ENCODE measurements at regions of chr17 and their contacts with region 1.

Region 1: DNA sequence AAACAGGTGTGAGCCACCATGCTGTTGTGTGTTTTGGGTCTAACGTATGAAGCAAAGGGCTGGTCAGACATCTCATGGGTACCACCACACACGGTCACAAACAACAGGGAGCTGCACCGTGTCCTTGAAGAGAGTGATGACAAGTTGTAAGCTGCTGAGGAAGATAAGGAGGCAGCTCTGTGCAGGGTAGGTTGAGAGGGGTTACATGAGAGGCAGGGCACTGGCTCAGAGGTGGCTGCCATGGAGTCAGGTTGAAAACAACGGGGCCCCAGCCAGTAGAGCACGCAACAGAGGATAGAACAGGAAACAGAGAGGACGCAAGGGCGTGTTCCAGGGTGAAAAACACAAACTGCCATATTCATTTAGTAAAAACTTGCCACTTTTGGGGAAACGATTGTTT is 52.2 kb downstream of the TRARG1 start:
- DNase-seq: peak; percentile 57
- H3K4me3 ChIP-seq: peak overlapping the region; percentile 9
- H3K27ac ChIP-seq: peak overlapping the region; percentile 38
- H3K4me1 ChIP-seq: peaks cover 13% of the 10 kb centered on the region
- H3K27me3 ChIP-seq: no peaks in the 10 kb centered on the region
- CTCF ChIP-seq: no peak

Region 2: GRCh38 chr17:1164935-1165556 is 166.7 kb before region 1 on chr17:
- intact Hi-C with region 1: no loop called
- DNase-seq: peak; percentile 64
- H3K4me3 ChIP-seq: peak overlapping the region; percentile 17
- H3K27ac ChIP-seq: peak overlapping the region; percentile 86
- H3K4me1 ChIP-seq: peaks cover 51% of the 10 kb centered on the region
- H3K27me3 ChIP-seq: no peaks in the 10 kb centered on the region
- CTCF ChIP-seq: peak; percentile 47

Region 3: DNA sequence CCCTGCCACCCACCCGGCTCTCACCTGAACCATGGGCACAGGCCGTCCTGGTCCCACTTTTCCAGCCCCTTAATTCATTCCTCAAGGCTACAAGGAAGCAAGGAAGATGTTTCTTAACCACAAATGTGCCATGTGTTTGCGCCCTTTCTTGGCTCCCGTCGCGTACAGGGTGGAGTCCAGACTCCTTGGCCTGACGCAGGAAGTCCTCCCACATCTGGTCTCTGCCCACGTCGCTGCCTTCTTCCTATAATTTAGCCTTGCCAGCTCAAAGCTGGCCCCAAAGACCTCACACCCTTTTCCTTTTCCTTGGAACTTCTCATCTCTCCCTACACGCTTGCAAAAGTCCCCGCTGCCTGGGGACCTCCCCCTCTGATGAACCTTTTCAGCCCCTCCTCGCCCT is 100.3 kb before region 1 on chr17:
- intact Hi-C with region 1: no loop called
- DNase-seq: peak; percentile 53
- H3K4me3 ChIP-seq: no peak overlapping the region
- H3K27ac ChIP-seq: peak overlapping the region; percentile 38
- H3K4me1 ChIP-seq: peaks cover 43% of the 10 kb centered on the region
- H3K27me3 ChIP-seq: peaks cover 70% of the 10 kb centered on the region
- CTCF ChIP-seq: no peak

Region 4: DNA sequence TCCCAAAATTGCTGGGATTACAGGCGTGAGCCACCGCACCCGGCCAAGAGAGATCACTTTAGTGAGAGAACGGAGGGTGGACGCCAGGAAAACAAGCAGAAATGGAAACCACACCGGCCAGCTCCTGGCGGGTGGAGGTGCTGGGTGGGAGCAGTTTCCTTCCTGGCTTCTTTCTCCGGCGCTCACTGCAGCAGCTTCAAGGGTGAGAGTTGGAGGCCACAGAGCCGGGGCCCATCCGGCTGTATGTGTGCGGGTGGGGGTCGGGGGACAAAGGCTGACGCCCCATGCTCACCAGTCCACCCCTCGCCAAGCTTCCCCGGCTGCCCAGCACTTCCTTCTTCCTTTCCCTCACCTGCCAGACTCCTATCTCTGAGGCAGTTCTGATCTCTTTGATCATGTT is 75.0 kb before region 1 on chr17:
- intact Hi-C with region 1: loop called (anchors 5 kb)
- DNase-seq: no peak
- H3K4me3 ChIP-seq: no peak overlapping the region
- H3K27ac ChIP-seq: peak overlapping the region; percentile 32
- H3K4me1 ChIP-seq: peaks cover 38% of the 10 kb centered on the region
- H3K27me3 ChIP-seq: no peaks in the 10 kb centered on the region
- CTCF ChIP-seq: no peak

Region 5: GRCh38 chr17:1275962-1276736 is 55.6 kb before region 1 on chr17:
- intact Hi-C with region 1: loop called (anchors 5 kb)
- DNase-seq: peak; percentile 62
- H3K4me3 ChIP-seq: no peak overlapping the region
- H3K27ac ChIP-seq: no peak overlapping the region
- H3K4me1 ChIP-seq: no peaks in the 10 kb centered on the region
- H3K27me3 ChIP-seq: peaks cover 76% of the 10 kb centered on the region
- CTCF ChIP-seq: peak; percentile 86

Region 6: DNA sequence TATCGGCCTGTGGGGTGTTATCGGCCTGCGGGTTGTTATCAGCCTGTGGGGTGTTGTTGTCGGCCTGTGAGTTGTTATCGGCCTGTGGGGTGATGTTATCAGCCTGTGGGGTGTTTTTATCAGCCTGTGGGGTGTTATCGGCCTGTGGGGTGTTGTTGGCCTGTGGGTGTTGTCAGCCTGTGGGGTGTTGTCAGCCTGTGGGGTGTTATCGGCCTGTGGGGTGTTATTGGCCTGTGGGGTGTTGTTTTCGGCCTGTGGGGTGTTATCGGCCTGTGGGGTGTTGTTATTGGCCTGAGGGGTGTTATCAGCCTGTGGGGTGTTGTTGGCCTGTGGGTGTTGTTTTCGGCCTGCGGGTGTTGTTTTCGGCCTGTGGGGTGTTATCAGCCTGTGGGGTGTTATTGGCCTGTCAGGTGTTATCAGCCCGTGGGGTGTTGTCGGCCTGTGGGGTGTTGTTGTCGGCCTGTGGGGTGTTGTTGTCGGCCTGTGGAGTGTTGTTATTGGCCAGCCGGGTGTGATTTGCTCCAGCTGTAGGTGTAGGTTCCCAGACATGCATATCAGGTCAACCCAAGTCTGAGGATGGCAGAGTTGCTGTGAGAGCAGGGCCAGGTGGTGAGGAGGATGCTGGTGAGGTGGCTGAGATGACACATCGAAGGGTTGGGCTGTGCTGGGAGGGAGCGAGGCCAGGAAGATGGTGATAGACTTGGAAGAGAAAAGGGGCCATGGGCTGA is 45.2 kb before region 1 on chr17:
- intact Hi-C with region 1: no loop called
- DNase-seq: no peak
- H3K4me3 ChIP-seq: no peak overlapping the region
- H3K27ac ChIP-seq: no peak overlapping the region
- H3K4me1 ChIP-seq: no peaks in the 10 kb centered on the region
- H3K27me3 ChIP-seq: no peaks in the 10 kb centered on the region
- CTCF ChIP-seq: no peak